ENCODE measurements at regions of chrX and their contacts with region 1.

Region 1: DNA sequence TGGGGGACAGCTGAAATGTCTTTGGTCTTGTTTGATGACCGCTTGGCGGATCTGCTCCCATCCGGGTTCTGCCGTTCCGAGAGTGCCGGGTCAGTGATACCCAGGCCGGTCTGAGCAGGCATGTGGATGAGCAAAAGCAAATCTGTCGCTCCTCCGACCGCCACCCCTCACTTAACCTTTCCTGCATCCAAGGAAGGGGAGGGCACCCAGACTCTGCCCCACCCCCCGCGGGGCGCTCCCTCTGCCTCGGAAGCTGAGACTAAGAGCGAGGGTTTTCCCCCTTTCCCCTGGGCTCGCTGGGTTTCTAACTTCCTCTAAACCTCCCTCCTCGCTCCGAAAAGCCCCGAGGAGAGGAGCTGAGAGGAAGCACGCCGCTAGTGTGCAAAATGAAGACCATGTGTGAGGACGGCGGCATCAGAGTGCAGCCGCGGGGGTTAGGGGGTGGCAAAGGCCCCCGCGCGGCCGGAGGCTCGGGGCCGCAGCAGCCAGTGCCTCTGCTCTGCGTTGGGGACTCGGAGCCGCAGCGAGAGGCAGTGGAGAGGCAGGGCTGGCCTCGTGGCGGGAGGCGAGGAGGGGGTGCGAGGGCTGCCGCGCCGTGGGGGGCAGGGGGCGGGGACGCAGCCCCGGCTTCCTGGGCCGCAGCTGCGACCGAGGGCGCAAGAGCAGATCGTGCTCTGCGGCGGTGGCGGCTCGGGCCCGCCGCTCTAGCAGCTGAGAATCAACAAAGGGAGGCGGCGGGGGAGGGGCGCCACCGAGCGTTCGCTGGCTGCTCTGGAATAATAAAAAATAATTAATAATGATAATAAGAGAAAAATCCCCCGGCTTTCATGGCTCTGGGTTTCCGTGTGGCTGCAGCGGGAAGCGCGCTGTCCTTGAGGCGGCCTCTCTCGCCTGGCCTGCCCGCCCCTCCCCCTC is 55.8 kb upstream of the BCOR start:
- DNase-seq: no peak
- H3K4me3 Mint-ChIP-seq: peak overlapping the region; percentile 80
- H3K27ac Mint-ChIP-seq: peak overlapping the region; percentile 69
- H3K4me1 Mint-ChIP-seq: peaks cover 18% of the 10 kb centered on the region
- H3K27me3 Mint-ChIP-seq: no peaks in the 10 kb centered on the region

Region 2: DNA sequence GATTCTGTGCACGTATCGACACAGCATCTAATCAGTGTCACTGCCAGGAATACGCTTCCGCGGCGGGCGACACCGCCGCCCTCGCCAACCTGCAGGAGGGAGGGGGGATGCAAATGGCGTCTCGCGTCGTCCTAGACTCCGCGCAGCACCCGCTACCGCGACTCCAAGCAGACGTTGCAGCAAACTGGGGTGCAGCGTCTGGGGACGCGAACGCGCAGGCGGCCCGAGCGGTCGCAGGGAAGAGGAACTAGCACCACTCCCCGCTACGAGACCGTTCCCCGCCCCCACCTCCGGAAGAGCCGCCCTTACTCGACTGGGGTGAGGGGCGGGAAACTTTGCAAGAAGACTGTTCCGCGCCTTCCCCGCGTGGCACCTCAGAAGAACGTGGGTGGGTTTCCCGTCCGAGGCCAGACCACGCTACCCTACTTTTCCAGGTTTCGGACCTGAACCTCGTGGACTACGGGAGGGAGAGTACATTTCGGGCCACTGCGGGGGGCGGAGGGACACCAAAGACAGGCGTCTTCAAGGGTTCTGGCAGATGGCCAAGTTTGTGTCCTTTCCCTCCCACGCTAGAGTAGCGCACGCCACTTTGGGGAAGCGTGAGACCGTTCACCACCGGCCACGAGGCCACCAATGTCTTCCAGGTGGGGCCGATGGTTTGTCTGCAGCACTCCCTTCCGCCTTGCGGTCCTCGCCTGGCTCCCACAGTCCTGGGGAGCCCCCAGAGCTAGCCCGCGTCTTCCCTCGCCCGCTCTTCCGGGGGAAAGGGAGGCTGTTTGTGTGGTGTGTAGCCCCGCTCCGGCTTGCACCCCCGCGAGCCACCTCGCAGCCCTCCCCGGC is 22.1 kb after region 1 on chrX:
- intact Hi-C with region 1: loop called (anchors 2 kb)
- DNase-seq: peak; percentile 73
- H3K4me3 Mint-ChIP-seq: peak overlapping the region; percentile 86
- H3K27ac Mint-ChIP-seq: peak overlapping the region; percentile 96
- H3K4me1 Mint-ChIP-seq: peaks cover 27% of the 10 kb centered on the region
- H3K27me3 Mint-ChIP-seq: no peaks in the 10 kb centered on the region

Measured in activated T-helper 2 cell treated with anti-CD3 and anti-CD28 coated beads, Interferon-gamma antibody, Interleukin-2, Interleukin-4, amounts not matched to agents 10 μg/mL and 5 μg/mL and 100 μg/mL, durations not matched to agents 14 hours and 24 hours and 36 hours (primary cell).